ENCODE measurements at regions of chr19 and their contacts with region 1.

Region 1: GRCh38 chr19:12272980-12273901 is 21.4 kb downstream of the ZNF44 start:
- DNase-seq: no peak
- ATAC-seq: no peak
- H3K4me3 ChIP-seq: peak overlapping the region in 1 of 2 donors; percentile 12
- H3K4me3 Mint-ChIP-seq: peak overlapping the region in 1 of 3 donors; percentile 21
- H3K27ac ChIP-seq: no peak overlapping the region
- H3K27ac Mint-ChIP-seq: no peak overlapping the region
- H3K4me1 ChIP-seq: peaks cover 0 to 3% of the 10 kb centered on the region in 2 experiments
- H3K4me1 Mint-ChIP-seq: peaks cover 12 to 16% (median 16%) of the 10 kb centered on the region in 3 donors
- H3K27me3 ChIP-seq: no peaks in the 10 kb centered on the region
- H3K27me3 Mint-ChIP-seq: no peaks in the 10 kb centered on the region

Region 2: GRCh38 chr19:12205296-12205695 is 67.9 kb before region 1 on chr19:
- CTCF ChIA-PET with region 1: no interaction called
- POLR2A ChIA-PET with region 1: no interaction called
- DNase-seq: no peak
- ATAC-seq: no peak
- H3K4me3 ChIP-seq: no peak overlapping the region
- H3K4me3 Mint-ChIP-seq: no peak overlapping the region
- H3K27ac ChIP-seq: no peak overlapping the region
- H3K27ac Mint-ChIP-seq: no peak overlapping the region
- H3K4me1 ChIP-seq: peaks cover 6% of the 10 kb centered on the region in 2 experiments
- H3K4me1 Mint-ChIP-seq: peaks cover 12 to 20% (median 15%) of the 10 kb centered on the region in 3 donors
- H3K27me3 ChIP-seq: no peaks in the 10 kb centered on the region
- H3K27me3 Mint-ChIP-seq: no peaks in the 10 kb centered on the region

Region 3: DNA sequence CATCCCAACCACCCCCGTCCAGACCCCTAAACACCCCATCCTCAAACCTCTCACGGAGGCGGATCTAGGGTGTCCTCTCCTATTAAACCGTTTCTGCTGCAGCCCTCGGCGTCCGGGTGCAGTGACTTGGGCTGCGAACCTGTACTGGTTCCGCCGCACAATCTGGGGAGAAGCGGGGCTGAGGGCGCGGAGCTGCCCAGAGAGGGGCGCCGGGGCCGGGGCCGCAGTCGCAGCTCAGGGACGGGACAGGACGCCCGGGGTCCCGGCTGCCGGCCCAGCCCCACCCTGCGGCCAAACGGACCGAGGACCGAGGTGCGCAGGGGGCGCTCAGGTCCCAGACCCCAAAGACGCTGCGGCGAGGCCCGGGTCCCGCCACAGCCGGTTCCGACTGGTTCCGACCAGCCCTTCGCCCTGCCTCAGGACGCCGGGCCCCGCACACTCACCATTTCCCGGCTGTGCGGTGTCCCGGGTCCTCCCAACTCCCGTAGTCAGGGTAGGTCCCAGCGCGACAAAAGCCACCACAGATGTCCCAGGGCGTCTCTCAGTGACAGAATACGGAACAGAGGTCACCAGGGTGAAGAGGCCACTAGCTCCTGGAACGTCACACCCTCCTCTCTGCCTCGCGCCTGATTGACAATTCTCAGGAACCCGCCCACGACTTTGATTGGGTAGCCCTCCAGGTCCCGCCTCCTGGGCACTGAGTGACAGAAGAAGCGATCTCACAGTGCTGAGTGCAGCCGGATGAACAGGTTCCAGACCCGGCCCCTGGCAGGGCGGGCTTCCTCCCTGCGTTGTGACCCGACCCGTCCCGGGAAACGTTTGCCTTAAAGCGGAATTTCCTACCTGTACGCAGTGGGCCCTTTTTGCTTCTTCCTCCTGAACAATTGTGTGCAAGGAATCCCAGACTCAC is 21.3 kb after region 1 on chr19 and contains the start of gene ZNF44:
- CTCF ChIA-PET with region 1: no interaction called
- POLR2A ChIA-PET with region 1: interaction called in 1 of 2 experiments, 12 read pairs
- DNase-seq: peak; percentile 88 to 98 (median 95)
- ATAC-seq: peak; percentile 97 to 98 (median 97)
- H3K4me3 ChIP-seq: peak within 1 kb of the TSS; percentile 87 to 97
- H3K4me3 Mint-ChIP-seq: peak within 1 kb of the TSS; percentile 97 to 100 (median 100)
- H3K27ac ChIP-seq: peak within 1 kb of the TSS; percentile 85
- H3K27ac Mint-ChIP-seq: peak within 1 kb of the TSS; percentile 96 to 99
- H3K4me1 ChIP-seq: peaks cover 10 to 44% of the 10 kb centered on the region in 2 experiments
- H3K4me1 Mint-ChIP-seq: peaks cover 38 to 45% (median 39%) of the 10 kb centered on the region in 3 donors
- H3K27me3 ChIP-seq: no peaks in the 10 kb centered on the region
- H3K27me3 Mint-ChIP-seq: no peaks in the 10 kb centered on the region
- total RNA-seq, gene ZNF44: 22.8 to 65.1 (median 58.5) TPM

Region 4: GRCh38 chr19:12513531-12514061 is 240.4 kb after region 1 on chr19:
- CTCF ChIA-PET with region 1: interaction called in 1 of 2 experiments, 11 read pairs
- POLR2A ChIA-PET with region 1: no interaction called
- DNase-seq: no peak
- ATAC-seq: no peak
- H3K4me3 ChIP-seq: no peak overlapping the region
- H3K4me3 Mint-ChIP-seq: no peak overlapping the region
- H3K27ac ChIP-seq: no peak overlapping the region
- H3K27ac Mint-ChIP-seq: no peak overlapping the region
- H3K4me1 ChIP-seq: no peaks in the 10 kb centered on the region
- H3K4me1 Mint-ChIP-seq: peaks cover 0 to 5% (median 2%) of the 10 kb centered on the region in 3 donors
- H3K27me3 ChIP-seq: peaks cover 0 to 21% of the 10 kb centered on the region in 2 experiments
- H3K27me3 Mint-ChIP-seq: peaks cover 3 to 8% of the 10 kb centered on the region in 2 donors